ENCODE measurements at regions of chr12 and their contacts with region 1.

Region 1: GRCh38 chr12:6195665-6196535 is 4.3 kb upstream of the CD9 start:
- DNase-seq: peak; percentile 87
- H3K4me3 Mint-ChIP-seq: no peak overlapping the region
- H3K27ac Mint-ChIP-seq: no peak overlapping the region
- H3K4me1 Mint-ChIP-seq: peaks cover 7% of the 10 kb centered on the region
- H3K27me3 Mint-ChIP-seq: no peaks in the 10 kb centered on the region

Region 2: GRCh38 chr12:5988659-5989116 is 207.2 kb before region 1 on chr12:
- CTCF ChIA-PET with region 1: interaction called, 5 read pairs
- intact Hi-C with region 1: loop called (anchors 5 kb)
- DNase-seq: peak; percentile 79
- H3K4me3 Mint-ChIP-seq: no peak overlapping the region
- H3K27ac Mint-ChIP-seq: no peak overlapping the region
- H3K4me1 Mint-ChIP-seq: no peaks in the 10 kb centered on the region
- H3K27me3 Mint-ChIP-seq: no peaks in the 10 kb centered on the region

Region 3: GRCh38 chr12:6062757-6063735 is 132.9 kb before region 1 on chr12:
- CTCF ChIA-PET with region 1: interaction called, 5 read pairs
- intact Hi-C with region 1: loop called (anchors 1 kb)
- DNase-seq: peak; percentile 68
- H3K4me3 Mint-ChIP-seq: no peak overlapping the region
- H3K27ac Mint-ChIP-seq: no peak overlapping the region
- H3K4me1 Mint-ChIP-seq: no peaks in the 10 kb centered on the region
- H3K27me3 Mint-ChIP-seq: no peaks in the 10 kb centered on the region

Region 4: GRCh38 chr12:6230321-6231110 is 34.6 kb after region 1 on chr12:
- CTCF ChIA-PET with region 1: interaction called, 12 read pairs
- intact Hi-C with region 1: loop called (anchors 5 kb)
- DNase-seq: peak; percentile 74
- H3K4me3 Mint-ChIP-seq: peak overlapping the region; percentile 11
- H3K27ac Mint-ChIP-seq: peak overlapping the region; percentile 79
- H3K4me1 Mint-ChIP-seq: peaks cover 16% of the 10 kb centered on the region
- H3K27me3 Mint-ChIP-seq: no peaks in the 10 kb centered on the region

Region 5: DNA sequence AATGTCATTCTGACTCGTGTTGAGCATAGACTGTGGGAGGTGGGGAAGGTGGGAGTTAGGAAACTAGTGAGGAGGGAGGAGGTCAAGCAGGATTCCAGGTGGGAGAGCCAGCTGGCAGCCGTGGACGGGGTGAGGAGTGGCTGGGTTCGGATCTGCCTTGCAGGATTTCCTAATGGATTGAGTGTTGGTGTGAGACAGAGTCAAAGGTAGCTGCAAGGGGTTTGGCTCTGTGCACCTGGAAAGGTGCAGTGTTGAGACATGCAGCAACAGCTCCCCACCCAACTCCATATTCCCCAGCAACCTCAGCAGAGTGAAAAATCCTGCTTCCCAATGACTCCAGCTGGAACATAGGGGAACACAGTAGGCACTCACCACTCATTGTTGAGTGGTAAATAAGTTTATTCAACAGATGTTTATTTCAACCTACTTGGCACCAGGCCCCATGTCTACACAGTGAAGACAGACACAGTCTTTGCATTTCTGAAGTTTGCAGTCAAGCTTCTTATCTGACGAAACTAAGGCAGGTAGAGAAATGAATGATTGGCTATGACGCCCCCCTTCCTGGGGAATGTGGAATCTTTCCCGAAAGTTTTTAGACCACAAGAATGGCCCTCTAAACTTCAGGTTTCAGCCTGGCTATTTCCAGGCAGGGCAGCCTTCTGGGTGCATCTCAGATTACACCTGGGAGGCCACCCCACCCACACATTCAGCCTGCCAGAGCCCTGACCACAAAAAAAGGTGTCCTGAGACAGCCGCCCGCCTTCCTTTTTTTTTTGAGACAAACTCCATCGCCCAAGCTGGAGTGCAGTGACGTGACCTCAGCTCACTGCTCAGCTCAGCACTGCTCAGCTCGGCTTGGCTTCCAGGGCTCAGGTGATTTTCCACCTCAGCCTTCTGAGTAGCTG is 76.7 kb after region 1 on chr12:
- CTCF ChIA-PET with region 1: interaction called, 69 read pairs
- intact Hi-C with region 1: no loop called
- DNase-seq: no peak
- H3K4me3 Mint-ChIP-seq: no peak overlapping the region
- H3K27ac Mint-ChIP-seq: no peak overlapping the region
- H3K4me1 Mint-ChIP-seq: peaks cover under 1% of the 10 kb centered on the region
- H3K27me3 Mint-ChIP-seq: peaks cover 6% of the 10 kb centered on the region

Region 6: DNA sequence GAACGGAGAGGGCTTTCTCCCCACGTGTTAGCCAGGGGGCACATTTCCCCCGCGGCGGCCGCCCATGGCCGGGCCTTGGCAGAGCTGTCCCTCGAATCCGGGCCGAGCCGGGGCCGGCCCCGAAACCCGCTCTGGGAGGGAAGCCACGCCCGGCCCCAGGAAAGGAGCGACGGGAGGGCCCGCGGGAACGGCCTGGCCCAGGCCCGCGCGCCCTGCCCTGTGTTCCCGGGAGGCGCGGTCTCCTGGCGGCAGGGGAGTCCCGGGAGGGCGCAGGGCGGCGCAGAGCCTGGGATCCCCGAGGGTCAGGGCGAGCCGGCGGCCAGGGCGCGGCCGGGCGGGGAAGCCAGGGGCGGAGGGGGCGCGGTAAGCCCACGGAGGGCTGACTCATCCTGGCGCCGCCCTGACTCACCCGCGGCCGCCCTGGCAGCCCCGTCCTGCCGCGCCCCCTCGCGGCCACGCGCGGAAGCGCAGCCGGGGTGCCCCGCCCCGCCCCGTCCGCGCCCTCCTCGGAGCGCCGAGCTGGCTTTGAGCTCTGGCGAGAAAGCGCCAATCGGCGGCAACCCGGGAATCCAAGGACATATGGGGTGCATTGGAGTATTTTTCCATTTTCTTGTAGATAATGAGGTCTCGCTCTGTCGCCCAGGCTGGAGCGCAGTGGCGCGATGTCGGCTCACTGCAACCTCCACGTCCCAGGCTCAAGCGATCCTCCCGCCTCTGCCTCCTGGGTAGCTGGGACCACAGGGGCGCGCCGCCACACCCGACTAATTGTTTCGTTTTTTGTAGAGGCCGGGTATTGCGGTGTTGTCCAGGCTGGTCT is 82.7 kb after region 1 on chr12:
- CTCF ChIA-PET with region 1: interaction called, 69 read pairs
- intact Hi-C with region 1: loop called (anchors 1 kb)
- DNase-seq: peak; percentile 80
- H3K4me3 Mint-ChIP-seq: peak overlapping the region; percentile 75
- H3K27ac Mint-ChIP-seq: peak overlapping the region; percentile 71
- H3K4me1 Mint-ChIP-seq: peaks cover 6% of the 10 kb centered on the region
- H3K27me3 Mint-ChIP-seq: peaks cover 17% of the 10 kb centered on the region

Region 7: GRCh38 chr12:6285063-6285477 is 89.2 kb after region 1 on chr12:
- CTCF ChIA-PET with region 1: interaction called, 69 read pairs
- intact Hi-C with region 1: loop called (anchors 1 kb)
- DNase-seq: peak; percentile 70
- H3K4me3 Mint-ChIP-seq: no peak overlapping the region
- H3K27ac Mint-ChIP-seq: no peak overlapping the region
- H3K4me1 Mint-ChIP-seq: no peaks in the 10 kb centered on the region
- H3K27me3 Mint-ChIP-seq: peaks cover 3% of the 10 kb centered on the region

Measured in activated naive CD4-positive, alpha-beta T cell treated with anti-CD3 and anti-CD28 coated beads for 36 hours (primary cell).